H1 (cell line): ENCODE measurements at regions of chr15 and their contacts with region 1.

Region 1: DNA sequence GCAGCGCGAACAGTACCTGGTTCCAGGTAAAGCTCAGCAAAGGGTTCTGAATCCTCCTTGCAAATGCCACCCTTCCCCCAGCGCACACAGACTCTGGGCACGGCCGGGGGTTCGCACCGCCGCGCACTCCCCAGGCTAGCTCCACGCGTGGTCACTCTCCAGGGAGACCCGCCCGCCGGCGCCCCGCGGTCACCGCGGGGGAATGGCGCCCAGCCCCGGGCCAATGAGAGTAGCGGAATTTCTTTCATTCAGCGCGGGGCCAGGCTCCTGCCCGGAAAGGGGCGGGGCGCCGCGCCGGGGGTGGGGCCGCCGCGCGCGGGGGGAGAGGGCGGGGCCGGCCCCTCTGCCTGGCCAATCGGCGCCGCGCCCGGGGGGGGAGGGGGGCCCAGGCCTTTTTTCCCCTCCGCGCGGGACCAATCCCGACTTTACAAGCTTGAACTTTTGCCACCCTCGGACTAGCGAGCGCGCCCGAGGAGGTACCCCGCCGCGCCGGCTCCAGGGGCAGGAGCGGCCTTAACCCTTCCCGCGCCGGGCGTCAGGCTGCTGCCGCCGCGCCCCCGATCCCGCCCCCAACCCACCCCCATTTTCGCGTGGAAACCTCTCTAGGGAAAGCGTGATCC is 1.1 kb upstream of the SMAD6 start:
- DNase-seq: peak; percentile 65 to 94
- H3K4me3 ChIP-seq: peak overlapping the region; percentile 54 to 83 (median 70)
- H3K27ac ChIP-seq: no peak overlapping the region
- H3K4me1 ChIP-seq: peaks cover 0 to 22% (median 9%) of the 10 kb centered on the region in 4 experiments; a peak in 6 of 7 replicates
- H3K27me3 ChIP-seq: peaks cover 18 to 45% (median 35%) of the 10 kb centered on the region in 4 experiments; a peak in 6 of 7 replicates
- CTCF ChIP-seq: no peak
- EP300 ChIP-seq: no peak
- POLR2A ChIP-seq: no peak
- RAD21 ChIP-seq: no peak

Region 2: GRCh38 chr15:66598095-66598815 is 102.7 kb before region 1 on chr15:
- CTCF ChIA-PET with region 1: interaction called, 361 read pairs
- POLR2A ChIA-PET with region 1: interaction called, 3 read pairs
- DNase-seq: no peak
- H3K4me3 ChIP-seq: no peak overlapping the region
- H3K27ac ChIP-seq: no peak overlapping the region
- H3K4me1 ChIP-seq: no peaks in the 10 kb centered on the region
- H3K27me3 ChIP-seq: no peaks in the 10 kb centered on the region
- CTCF ChIP-seq: no peak
- EP300 ChIP-seq: no peak
- POLR2A ChIP-seq: no peak
- RAD21 ChIP-seq: no peak

Region 3: DNA sequence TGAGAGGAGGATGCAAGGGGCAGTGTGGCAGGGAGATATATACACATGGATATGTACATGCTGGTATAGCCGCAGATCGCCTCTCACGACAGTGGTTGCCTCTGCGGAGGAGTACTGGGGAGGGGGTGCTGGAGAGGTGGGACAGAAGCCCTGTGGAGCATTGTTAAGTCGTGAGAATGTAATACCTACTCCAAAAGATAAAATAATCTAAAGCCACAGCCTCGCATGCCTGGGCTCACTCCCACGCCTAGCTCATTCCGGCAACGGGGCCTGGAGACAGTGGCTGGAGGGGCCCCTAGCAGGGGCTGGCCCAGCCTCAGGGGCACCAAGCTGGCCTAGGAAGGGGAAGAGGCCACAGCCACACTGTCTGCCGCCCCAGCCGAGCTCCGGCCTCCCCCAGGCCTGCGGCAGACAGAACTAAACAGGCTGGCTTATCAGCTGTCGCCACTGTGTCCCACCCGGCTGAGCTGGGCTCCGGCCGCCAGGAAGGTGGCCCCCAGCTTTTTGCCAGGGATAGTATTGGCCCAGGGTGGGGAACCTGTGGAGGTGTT is 70.0 kb before region 1 on chr15:
- CTCF ChIA-PET with region 1: interaction called, 12 read pairs
- POLR2A ChIA-PET with region 1: interaction called, 3 read pairs
- DNase-seq: no peak
- H3K4me3 ChIP-seq: no peak overlapping the region
- H3K27ac ChIP-seq: no peak overlapping the region
- H3K4me1 ChIP-seq: peaks cover 8 to 22% (median 14%) of the 10 kb centered on the region in 4 experiments
- H3K27me3 ChIP-seq: no peaks in the 10 kb centered on the region
- CTCF ChIP-seq: no peak
- EP300 ChIP-seq: no peak
- POLR2A ChIP-seq: no peak
- RAD21 ChIP-seq: no peak

Region 4: DNA sequence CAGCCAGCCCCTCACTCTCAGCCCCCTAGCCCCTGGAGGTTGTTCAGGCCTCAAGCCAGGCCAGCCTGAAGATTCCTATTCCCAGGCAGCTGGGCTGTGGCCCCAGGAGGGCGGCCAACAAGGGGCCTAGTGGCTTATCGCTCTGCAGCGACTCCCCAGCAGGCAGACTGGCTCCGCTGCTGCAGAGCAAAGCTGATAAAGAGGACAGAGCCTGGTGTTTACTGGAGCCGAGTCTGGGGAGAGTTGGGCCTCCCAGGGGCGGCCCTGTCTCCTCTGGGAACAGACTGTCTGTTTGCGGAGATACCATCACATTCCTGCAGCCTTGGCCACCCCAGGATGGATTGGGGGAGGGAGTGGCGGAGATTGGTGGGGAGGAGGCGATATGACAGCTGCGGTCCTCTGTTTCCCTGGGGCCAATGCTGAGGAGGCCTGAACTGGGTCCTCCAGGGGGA is 21.2 kb before region 1 on chr15:
- CTCF ChIA-PET with region 1: interaction called, 88 read pairs
- POLR2A ChIA-PET with region 1: no interaction called
- DNase-seq: peak in 1 of 2 experiments; percentile 71
- H3K4me3 ChIP-seq: no peak overlapping the region
- H3K27ac ChIP-seq: no peak overlapping the region
- H3K4me1 ChIP-seq: peaks cover 6 to 10% (median 9%) of the 10 kb centered on the region in 4 experiments
- H3K27me3 ChIP-seq: no peaks in the 10 kb centered on the region; a peak in 1 of 7 replicates
- CTCF ChIP-seq: no peak
- EP300 ChIP-seq: no peak
- POLR2A ChIP-seq: no peak
- RAD21 ChIP-seq: no peak; a peak in 1 of 4 replicates

Region 5: DNA sequence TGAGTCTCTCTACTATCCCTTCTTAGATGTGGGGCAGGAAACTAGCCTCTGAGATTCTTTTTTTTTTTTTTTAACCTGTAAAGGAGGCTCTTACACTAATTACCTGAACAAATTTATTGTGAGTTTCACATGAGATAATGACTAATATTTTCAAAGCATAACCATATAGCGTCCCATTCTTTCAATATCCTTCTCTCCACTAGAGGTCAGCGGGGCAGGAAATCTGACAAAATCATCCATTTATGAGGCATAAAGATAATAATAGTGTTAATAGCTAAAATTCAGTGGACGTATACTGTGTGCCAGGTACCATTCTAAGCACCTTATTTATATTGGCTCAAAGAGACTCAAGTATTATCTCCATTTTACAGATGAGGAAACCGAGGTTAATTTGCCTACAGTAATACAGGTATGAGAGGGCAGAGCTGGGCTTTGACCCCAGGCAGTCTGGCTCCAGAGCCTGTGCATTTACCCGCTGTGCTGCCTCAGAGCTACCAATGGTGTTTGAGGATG is 15.2 kb before region 1 on chr15:
- CTCF ChIA-PET with region 1: interaction called, 88 read pairs
- POLR2A ChIA-PET with region 1: interaction called, 4 read pairs
- DNase-seq: no peak
- H3K4me3 ChIP-seq: no peak overlapping the region
- H3K27ac ChIP-seq: no peak overlapping the region
- H3K4me1 ChIP-seq: no peaks in the 10 kb centered on the region
- H3K27me3 ChIP-seq: no peaks in the 10 kb centered on the region
- CTCF ChIP-seq: peak in 1 of 3 experiments; percentile 22; a peak in 1 of 4 replicates
- EP300 ChIP-seq: no peak
- POLR2A ChIP-seq: no peak
- RAD21 ChIP-seq: peak in 1 of 2 experiments; percentile 11; a peak in 1 of 4 replicates

Region 6: DNA sequence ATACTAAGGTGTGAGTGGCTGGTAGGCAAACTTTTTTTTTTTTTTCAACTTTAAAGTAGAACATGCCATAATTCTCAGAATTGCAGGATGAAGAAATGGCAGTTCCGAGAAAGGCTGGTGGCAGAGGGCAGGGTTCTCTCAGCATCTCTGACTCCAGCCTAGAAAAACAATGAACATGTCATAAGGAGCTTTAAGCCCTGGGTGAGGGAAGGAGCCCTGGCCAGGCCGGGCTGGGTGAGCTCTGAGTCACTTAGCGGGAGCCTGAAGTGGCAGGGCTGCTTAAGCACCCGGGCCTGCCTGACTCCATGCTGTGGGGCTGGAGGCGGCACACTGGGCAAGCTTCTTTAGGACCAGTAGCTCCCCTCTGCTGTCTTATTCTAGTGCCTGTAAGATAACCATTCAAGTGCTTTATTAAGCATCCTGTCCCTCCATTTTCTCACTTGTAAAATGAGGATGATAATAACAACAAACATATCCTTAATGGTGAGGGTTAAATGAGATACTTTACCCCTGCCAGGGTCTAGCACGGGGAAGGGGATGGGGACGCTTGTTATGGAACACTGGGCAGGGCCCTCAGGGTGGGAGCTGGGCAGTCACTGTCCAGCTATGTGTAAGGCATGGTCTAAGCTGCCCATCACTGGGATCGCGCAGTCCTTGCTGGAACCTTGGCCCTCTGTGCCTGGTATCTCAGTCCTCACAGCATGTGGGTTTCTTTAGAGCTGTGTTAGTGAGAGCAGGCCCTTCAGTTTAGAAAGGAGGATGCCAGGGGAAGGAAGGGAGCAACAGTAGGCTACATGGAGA is 19.5 kb after region 1 on chr15:
- CTCF ChIA-PET with region 1: interaction called, 105 read pairs
- POLR2A ChIA-PET with region 1: interaction called, 4 read pairs
- DNase-seq: no peak
- H3K4me3 ChIP-seq: no peak overlapping the region
- H3K27ac ChIP-seq: no peak overlapping the region
- H3K4me1 ChIP-seq: peaks cover 0 to 4% (median 2%) of the 10 kb centered on the region in 4 experiments; a peak in 4 of 7 replicates
- H3K27me3 ChIP-seq: no peaks in the 10 kb centered on the region
- CTCF ChIP-seq: no peak
- EP300 ChIP-seq: no peak
- POLR2A ChIP-seq: no peak
- RAD21 ChIP-seq: no peak

Region 7: DNA sequence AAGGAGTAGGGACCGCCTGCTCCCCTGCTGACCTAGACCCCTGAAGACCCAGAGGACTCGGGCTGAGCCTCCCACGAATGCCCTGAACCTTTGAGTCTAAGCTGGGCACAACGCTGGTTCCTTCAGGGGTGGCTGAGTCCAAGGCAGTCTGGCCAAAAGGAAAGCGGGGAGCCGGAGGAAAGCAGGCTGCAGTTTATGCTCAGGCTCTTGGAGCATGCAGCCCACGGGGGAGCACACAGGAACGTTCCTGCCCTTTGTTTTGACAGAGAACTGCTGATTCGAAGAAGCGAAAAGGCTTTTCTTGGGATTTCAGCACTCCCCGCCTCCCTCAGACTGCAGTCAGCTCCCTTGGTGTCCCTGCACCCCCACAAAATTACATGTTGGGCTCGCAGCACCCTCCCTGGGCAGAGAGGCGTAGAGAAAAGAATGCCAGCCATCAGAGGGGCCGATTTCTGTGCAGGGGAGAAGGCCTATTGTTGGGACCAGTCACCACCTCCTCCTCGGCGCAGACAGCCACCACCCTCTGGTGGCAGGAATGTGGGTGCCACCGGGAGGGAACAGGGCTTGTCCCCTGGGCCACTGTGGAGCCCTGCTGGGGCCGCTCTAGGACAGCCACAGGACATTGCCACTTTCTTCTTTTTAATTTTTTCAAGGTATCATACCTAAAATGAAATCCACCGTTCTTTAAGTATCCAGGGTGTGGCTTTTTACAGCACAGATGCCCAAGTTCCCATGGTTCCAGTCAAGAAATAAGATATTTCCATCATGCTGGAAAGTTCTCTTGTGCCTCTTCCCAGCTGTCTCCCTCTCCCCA is 73.3 kb after region 1 on chr15:
- CTCF ChIA-PET with region 1: interaction called, 148 read pairs
- POLR2A ChIA-PET with region 1: interaction called, 3 read pairs
- DNase-seq: peak; percentile 68 to 95
- H3K4me3 ChIP-seq: peak overlapping the region in 1 of 4 experiments; percentile 23; a peak in 3 of 8 replicates
- H3K27ac ChIP-seq: peak overlapping the region; percentile 56
- H3K4me1 ChIP-seq: peaks cover 11 to 24% (median 18%) of the 10 kb centered on the region in 4 experiments
- H3K27me3 ChIP-seq: no peaks in the 10 kb centered on the region
- CTCF ChIP-seq: peak; percentile 94 to 95 (median 95)
- EP300 ChIP-seq: peak in 1 of 2 experiments; percentile 60; a peak in 1 of 3 replicates
- POLR2A ChIP-seq: no peak
- RAD21 ChIP-seq: peak; percentile 87 to 92